Left colon (tissue), 2 donors: ENCODE measurements at regions of chr4 and their contacts with region 1.

Region 1: DNA sequence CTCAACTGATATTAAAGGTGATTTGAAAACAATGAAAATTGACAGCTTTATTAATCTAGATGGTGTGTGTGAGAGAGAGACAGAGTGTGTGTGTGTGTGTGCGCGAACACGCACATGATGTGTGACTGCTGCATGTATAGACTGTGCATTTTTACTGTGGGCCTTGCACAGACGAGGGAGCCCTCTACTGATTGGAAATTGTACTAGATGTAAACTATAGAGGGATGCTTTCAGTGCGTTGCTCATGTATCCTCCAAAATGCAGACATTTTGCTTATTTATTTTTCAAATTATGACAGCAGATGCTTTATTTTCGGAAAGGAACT is 168.4 kb upstream of the GK2 start:
- DNase-seq: peak in 1 of 2 donors; percentile 12
- ATAC-seq: peak; percentile 75

Region 2: GRCh38 chr4:78951862-78952472 is 624.4 kb before region 1 on chr4:
- intact Hi-C with region 1: loop called in 1 of 2 experiments (anchors 10 kb)
- DNase-seq: no peak
- ATAC-seq: peak; percentile 57

Region 3: GRCh38 chr4:79042079-79042674 is 534.2 kb before region 1 on chr4:
- intact Hi-C with region 1: loop called in 1 of 2 experiments (anchors 10 kb)
- DNase-seq: no peak
- ATAC-seq: peak; percentile 56